OCI-LY7 (cell line): ENCODE measurements at regions of chr5 and their contacts with region 1.

Region 1: DNA sequence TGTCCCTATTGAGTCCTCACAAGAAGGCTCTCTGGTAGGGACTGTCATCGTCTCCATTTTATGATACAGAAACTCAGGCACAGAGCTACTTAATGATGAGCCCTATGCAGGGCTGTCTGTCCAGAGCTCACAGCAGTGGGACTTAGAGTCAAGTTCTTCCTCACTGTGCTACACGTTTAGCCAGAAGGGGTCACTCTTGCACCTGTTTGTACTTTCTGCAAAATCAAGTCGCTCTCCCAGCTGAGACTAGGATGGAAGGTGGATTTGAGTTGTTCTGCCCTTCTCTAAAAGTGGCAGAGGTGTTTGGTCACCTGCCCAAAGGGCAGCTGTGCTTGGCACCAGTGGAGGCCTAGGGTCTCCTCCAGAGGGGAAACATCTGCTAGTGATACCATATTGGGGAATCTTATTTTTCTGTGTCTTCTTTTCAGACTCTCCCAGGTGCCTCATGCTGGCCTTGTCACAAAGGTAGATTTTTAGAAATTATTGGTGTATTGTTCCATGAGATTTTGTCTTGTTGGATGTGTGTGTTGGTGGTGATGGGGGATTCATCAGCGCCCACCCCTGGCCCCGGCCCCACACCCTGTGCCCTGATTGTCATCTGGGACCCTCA is 104.2 kb downstream of the PPARGC1B start:
- DNase-seq: peak; percentile 73
- H3K4me3 ChIP-seq: no peak overlapping the region
- H3K27ac ChIP-seq: no peak overlapping the region
- H3K4me1 ChIP-seq: no peaks in the 10 kb centered on the region
- CTCF ChIP-seq: peak; percentile 84

Region 2: DNA sequence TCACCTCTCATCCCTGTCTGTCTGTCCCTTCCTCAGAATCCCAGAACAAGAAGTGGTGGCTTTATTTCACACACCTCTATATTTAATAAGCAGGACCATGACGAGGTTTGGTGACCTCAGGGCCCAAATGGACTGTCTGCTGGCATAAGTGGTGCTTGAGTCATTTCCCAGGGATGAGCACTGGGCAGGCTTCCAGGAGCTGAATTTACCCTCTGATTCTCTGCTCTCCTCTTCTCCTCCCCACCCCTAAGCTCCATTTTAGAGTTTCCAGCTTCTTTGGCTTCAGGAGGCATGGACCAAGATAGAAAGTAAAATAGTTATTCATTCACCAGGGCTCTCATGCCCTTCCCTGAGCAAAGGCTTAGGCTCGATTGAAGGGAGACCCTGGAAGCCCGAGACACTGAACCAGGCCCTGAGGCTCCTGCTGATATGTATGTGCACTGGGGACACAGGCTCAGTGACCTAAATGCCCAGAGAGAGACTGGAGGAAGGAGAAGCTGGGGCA is 35.2 kb before region 1 on chr5:
- CTCF ChIA-PET with region 1: no interaction called
- POLR2A ChIA-PET with region 1: no interaction called
- intact Hi-C with region 1: no loop called
- DNase-seq: no peak
- H3K4me3 ChIP-seq: no peak overlapping the region
- H3K27ac ChIP-seq: no peak overlapping the region
- H3K4me1 ChIP-seq: no peaks in the 10 kb centered on the region
- CTCF ChIP-seq: no peak

Region 3: GRCh38 chr5:149983281-149983680 is 148.9 kb after region 1 on chr5:
- CTCF ChIA-PET with region 1: no interaction called
- POLR2A ChIA-PET with region 1: no interaction called
- intact Hi-C with region 1: no loop called
- DNase-seq: no peak
- H3K4me3 ChIP-seq: no peak overlapping the region
- H3K27ac ChIP-seq: no peak overlapping the region
- H3K4me1 ChIP-seq: no peaks in the 10 kb centered on the region
- CTCF ChIP-seq: no peak

Region 4: DNA sequence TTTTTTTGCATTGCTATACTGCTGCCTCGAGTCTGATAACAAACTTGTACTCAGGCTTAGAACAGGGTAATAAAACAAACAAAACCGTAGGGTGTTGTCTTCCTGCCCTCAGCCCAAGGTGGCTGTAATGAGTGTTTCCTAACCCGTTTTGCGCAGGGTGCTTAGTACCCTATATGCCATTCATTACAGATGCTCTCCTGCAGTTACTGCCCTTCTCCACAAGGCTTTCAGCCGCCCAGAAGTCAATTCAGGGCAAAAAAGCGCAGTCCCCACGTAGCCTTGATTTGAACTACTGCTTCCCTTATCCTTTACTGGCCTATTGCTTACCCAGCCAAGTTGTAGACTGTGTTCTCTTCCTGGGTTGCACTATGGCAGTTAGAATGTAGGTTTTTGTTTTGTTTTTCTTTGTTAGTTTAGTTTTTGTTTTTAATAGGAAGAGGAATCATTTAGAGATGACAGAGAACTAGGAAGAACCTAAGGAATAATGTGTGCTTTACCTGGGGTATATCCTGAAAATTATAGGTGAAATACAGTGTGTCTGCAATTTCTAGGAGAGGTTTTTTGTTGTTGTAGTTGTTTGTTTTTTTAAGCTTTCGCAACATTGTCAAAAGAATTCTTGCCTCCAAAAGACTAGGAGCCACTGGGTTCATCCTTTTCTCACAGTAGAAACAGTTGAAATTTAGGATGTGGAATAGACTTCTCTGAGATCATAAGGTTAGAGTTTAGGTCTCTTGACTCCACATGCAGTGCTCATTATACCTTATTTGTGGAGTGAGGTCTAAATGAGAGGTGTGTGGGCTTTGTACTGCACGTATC is 167.5 kb after region 1 on chr5:
- CTCF ChIA-PET with region 1: no interaction called
- POLR2A ChIA-PET with region 1: no interaction called
- intact Hi-C with region 1: no loop called
- DNase-seq: peak; percentile 88
- H3K4me3 ChIP-seq: peak overlapping the region; percentile 83
- H3K27ac ChIP-seq: peak overlapping the region; percentile 66
- H3K4me1 ChIP-seq: peaks cover 27% of the 10 kb centered on the region
- CTCF ChIP-seq: peak; percentile 73

Region 5: GRCh38 chr5:150291388-150292385 is 457.3 kb after region 1 on chr5:
- CTCF ChIA-PET with region 1: interaction called, 14 read pairs
- POLR2A ChIA-PET with region 1: no interaction called
- intact Hi-C with region 1: no loop called
- DNase-seq: no peak
- H3K4me3 ChIP-seq: no peak overlapping the region
- H3K27ac ChIP-seq: no peak overlapping the region
- H3K4me1 ChIP-seq: no peaks in the 10 kb centered on the region
- CTCF ChIP-seq: no peak